Sciatic nerve (tissue), 2 donors: ENCODE measurements at regions of chr20 and their contacts with region 1.

Region 1: DNA sequence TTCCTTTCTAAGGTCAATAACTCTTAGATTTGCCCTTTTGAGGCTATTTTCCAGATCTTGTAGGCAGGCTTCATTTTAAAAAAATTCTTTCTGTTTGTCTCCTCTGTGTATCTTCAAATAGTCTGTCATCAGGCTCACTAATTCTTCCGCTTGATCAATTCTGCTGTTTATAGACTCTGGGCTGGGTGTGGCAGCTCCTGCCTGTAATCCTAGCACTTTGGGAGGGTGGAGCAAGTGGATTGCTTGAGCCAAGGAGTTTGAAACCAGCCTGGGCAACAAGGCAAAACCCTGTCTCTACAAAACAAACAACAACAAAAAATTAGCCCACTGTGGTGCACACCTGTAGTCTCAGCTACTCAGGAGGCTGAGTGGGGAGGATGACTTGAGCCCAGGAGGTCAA is 40.0 kb upstream of the SCP2D1 start:
- DNase-seq: no peak
- ATAC-seq: no peak

Region 2: GRCh38 chr20:18712882-18713281 is 60.7 kb before region 1 on chr20:
- intact Hi-C with region 1: loop called (anchors 5 kb)
- DNase-seq: no peak
- ATAC-seq: no peak